T-cell (primary cell): ENCODE measurements at regions of chr2 and their contacts with region 1.

Region 1: GRCh38 chr2:84925724-84926376 is 20.4 kb downstream of the TMSB10 start:
- DNase-seq: peak; percentile 91 to 100 (median 96)
- ATAC-seq: peak; percentile 78 to 81 (median 79)
- H3K4me3 ChIP-seq: peak overlapping the region; percentile 61 to 77
- H3K4me3 Mint-ChIP-seq: peak overlapping the region; percentile 91 to 97 (median 92)
- H3K27ac ChIP-seq: peak overlapping the region; percentile 54
- H3K27ac Mint-ChIP-seq: peak overlapping the region; percentile 95 to 97
- H3K4me1 ChIP-seq: peaks cover 15 to 55% of the 10 kb centered on the region in 2 experiments
- H3K4me1 Mint-ChIP-seq: peaks cover 34 to 52% (median 40%) of the 10 kb centered on the region in 3 donors
- H3K27me3 ChIP-seq: no peaks in the 10 kb centered on the region
- H3K27me3 Mint-ChIP-seq: no peaks in the 10 kb centered on the region

Region 2: GRCh38 chr2:84498150-84498799 is 427.6 kb before region 1 on chr2:
- CTCF ChIA-PET with region 1: interaction called, 11 to 13 read pairs
- POLR2A ChIA-PET with region 1: no interaction called
- DNase-seq: no peak
- ATAC-seq: no peak
- H3K4me3 ChIP-seq: no peak overlapping the region
- H3K4me3 Mint-ChIP-seq: no peak overlapping the region
- H3K27ac ChIP-seq: no peak overlapping the region
- H3K27ac Mint-ChIP-seq: peak overlapping the region; percentile 7 to 51
- H3K4me1 ChIP-seq: peaks cover 4 to 10% of the 10 kb centered on the region in 2 experiments
- H3K4me1 Mint-ChIP-seq: peaks cover 15 to 18% (median 18%) of the 10 kb centered on the region in 3 donors
- H3K27me3 ChIP-seq: no peaks in the 10 kb centered on the region
- H3K27me3 Mint-ChIP-seq: no peaks in the 10 kb centered on the region

Region 3: DNA sequence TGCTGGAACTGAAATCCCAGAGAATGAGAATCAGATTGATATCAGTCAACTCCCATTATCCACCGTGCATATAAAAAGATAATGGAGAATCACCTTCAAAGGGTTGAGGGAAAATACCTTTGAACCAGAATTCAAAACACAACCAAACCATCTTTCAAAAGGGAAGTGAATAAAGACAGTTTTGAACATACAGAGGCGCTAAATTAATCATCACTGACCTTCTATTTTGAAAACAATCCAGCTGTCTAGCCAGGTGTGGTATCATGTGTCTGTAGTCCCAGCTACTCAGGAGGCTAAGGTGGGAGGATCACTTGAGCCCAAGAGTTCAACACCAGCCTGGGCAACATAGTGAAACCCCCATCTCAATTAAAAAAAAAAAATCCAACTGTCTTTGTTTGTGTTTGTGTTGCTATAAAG is 108.6 kb before region 1 on chr2:
- CTCF ChIA-PET with region 1: no interaction called
- POLR2A ChIA-PET with region 1: no interaction called
- DNase-seq: no peak
- ATAC-seq: peak in 1 of 4 experiments; percentile 27
- H3K4me3 ChIP-seq: no peak overlapping the region
- H3K4me3 Mint-ChIP-seq: peak overlapping the region in 1 of 3 donors; percentile 43
- H3K27ac ChIP-seq: peak overlapping the region; percentile 2
- H3K27ac Mint-ChIP-seq: peak overlapping the region; percentile 84 to 90
- H3K4me1 ChIP-seq: peaks cover 10 to 36% of the 10 kb centered on the region in 2 experiments
- H3K4me1 Mint-ChIP-seq: peaks cover 70 to 75% (median 73%) of the 10 kb centered on the region in 3 donors
- H3K27me3 ChIP-seq: no peaks in the 10 kb centered on the region
- H3K27me3 Mint-ChIP-seq: no peaks in the 10 kb centered on the region

Region 4: GRCh38 chr2:84888401-84889276 is 37.2 kb before region 1 on chr2:
- CTCF ChIA-PET with region 1: interaction called, 24 to 31 read pairs
- POLR2A ChIA-PET with region 1: interaction called, 3 to 15 read pairs
- DNase-seq: peak in 22 of 35 experiments; percentile 27 to 79 (median 46)
- ATAC-seq: peak; percentile 96 to 97 (median 96)
- H3K4me3 ChIP-seq: peak overlapping the region; percentile 45 to 60
- H3K4me3 Mint-ChIP-seq: peak overlapping the region; percentile 70 to 78 (median 72)
- H3K27ac ChIP-seq: peak overlapping the region; percentile 96
- H3K27ac Mint-ChIP-seq: peak overlapping the region; percentile 99
- H3K4me1 ChIP-seq: peaks cover 14 to 23% of the 10 kb centered on the region in 2 experiments
- H3K4me1 Mint-ChIP-seq: peaks cover 43 to 56% (median 48%) of the 10 kb centered on the region in 3 donors
- H3K27me3 ChIP-seq: no peaks in the 10 kb centered on the region
- H3K27me3 Mint-ChIP-seq: no peaks in the 10 kb centered on the region

Region 5: GRCh38 chr2:84905181-84906107 is 20.4 kb before region 1 on chr2 and contains the start of gene TMSB10:
- CTCF ChIA-PET with region 1: interaction called, 27 to 50 read pairs
- POLR2A ChIA-PET with region 1: interaction called, 9 to 15 read pairs
- DNase-seq: peak; percentile 77 to 93 (median 88)
- ATAC-seq: peak; percentile 71 to 82 (median 72)
- H3K4me3 ChIP-seq: peak within 1 kb of the TSS; percentile 88 to 96
- H3K4me3 Mint-ChIP-seq: peak within 1 kb of the TSS; percentile 94 to 96 (median 96)
- H3K27ac ChIP-seq: peak within 1 kb of the TSS; percentile 76
- H3K27ac Mint-ChIP-seq: peak within 1 kb of the TSS; percentile 94 to 95
- H3K4me1 ChIP-seq: peaks cover 26 to 38% of the 10 kb centered on the region in 2 experiments
- H3K4me1 Mint-ChIP-seq: peaks cover 52 to 62% (median 53%) of the 10 kb centered on the region in 3 donors
- H3K27me3 ChIP-seq: no peaks in the 10 kb centered on the region
- H3K27me3 Mint-ChIP-seq: no peaks in the 10 kb centered on the region
- total RNA-seq, gene TMSB10: 1,423 to 1,890 (median 1,689) TPM

Region 6: DNA sequence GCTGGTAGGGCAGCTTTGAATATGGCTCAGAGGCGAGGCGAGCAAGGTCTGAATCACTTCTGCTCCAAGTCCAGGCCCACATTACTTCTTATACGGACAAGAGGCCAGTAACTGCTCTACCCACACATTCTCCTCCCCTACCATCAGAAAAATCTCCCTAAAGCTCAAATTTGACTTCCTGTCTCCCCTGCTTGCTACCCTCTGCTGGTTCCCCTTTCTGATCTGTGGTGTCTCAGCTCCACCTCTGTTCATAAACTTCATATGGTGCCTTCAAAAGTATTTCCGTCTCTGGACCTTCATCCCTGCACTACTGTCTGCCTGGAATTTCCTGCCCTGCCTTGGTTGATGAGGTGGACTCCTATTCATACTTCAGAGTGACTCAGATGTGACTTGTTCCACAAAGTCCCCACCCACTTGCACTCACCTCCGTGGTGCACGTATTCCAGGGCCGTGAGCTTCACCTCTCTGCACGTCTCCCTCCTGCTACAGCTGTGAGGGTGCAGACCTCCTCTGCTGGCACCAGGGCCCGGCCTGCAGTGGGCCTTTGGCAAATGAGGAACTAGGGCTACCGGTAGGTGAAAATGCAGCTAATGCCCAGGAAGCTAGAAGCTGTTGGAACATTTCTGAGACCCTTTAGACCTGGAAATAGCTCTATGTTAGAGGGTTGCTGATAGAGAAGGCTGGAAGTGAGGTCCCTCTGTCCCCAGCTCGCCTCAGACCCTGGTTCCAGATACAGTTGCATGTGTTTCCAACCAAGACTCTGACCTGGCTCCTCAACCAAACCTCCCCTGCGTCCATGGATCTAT is 20.6 kb after region 1 on chr2:
- CTCF ChIA-PET with region 1: interaction called, 11 to 32 read pairs
- POLR2A ChIA-PET with region 1: interaction called in 1 of 2 experiments, 3 read pairs
- DNase-seq: peak in 28 of 35 experiments; percentile 1 to 71 (median 22)
- ATAC-seq: peak; percentile 84 to 90 (median 85)
- H3K4me3 ChIP-seq: peak overlapping the region; percentile 21 to 39
- H3K4me3 Mint-ChIP-seq: peak overlapping the region; percentile 57 to 68 (median 57)
- H3K27ac ChIP-seq: peak overlapping the region; percentile 63
- H3K27ac Mint-ChIP-seq: peak overlapping the region; percentile 88 to 93
- H3K4me1 ChIP-seq: peaks cover 15 to 22% of the 10 kb centered on the region in 2 experiments
- H3K4me1 Mint-ChIP-seq: peaks cover 24 to 44% (median 37%) of the 10 kb centered on the region in 3 donors
- H3K27me3 ChIP-seq: no peaks in the 10 kb centered on the region
- H3K27me3 Mint-ChIP-seq: no peaks in the 10 kb centered on the region

Region 7: GRCh38 chr2:85017411-85018048 is 91.7 kb after region 1 on chr2:
- CTCF ChIA-PET with region 1: interaction called, 7 to 21 read pairs
- POLR2A ChIA-PET with region 1: interaction called, 3 to 8 read pairs
- DNase-seq: peak in 1 of 35 experiments; percentile 38
- ATAC-seq: no peak
- H3K4me3 ChIP-seq: no peak overlapping the region
- H3K4me3 Mint-ChIP-seq: no peak overlapping the region
- H3K27ac ChIP-seq: no peak overlapping the region
- H3K27ac Mint-ChIP-seq: peak overlapping the region in 1 of 2 donors; percentile 27
- H3K4me1 ChIP-seq: peaks cover 6 to 14% of the 10 kb centered on the region in 2 experiments
- H3K4me1 Mint-ChIP-seq: peaks cover 69 to 79% (median 71%) of the 10 kb centered on the region in 3 donors
- H3K27me3 ChIP-seq: no peaks in the 10 kb centered on the region
- H3K27me3 Mint-ChIP-seq: no peaks in the 10 kb centered on the region